ENCODE measurements at regions of chr1 and their contacts with region 1.

Region 1: DNA sequence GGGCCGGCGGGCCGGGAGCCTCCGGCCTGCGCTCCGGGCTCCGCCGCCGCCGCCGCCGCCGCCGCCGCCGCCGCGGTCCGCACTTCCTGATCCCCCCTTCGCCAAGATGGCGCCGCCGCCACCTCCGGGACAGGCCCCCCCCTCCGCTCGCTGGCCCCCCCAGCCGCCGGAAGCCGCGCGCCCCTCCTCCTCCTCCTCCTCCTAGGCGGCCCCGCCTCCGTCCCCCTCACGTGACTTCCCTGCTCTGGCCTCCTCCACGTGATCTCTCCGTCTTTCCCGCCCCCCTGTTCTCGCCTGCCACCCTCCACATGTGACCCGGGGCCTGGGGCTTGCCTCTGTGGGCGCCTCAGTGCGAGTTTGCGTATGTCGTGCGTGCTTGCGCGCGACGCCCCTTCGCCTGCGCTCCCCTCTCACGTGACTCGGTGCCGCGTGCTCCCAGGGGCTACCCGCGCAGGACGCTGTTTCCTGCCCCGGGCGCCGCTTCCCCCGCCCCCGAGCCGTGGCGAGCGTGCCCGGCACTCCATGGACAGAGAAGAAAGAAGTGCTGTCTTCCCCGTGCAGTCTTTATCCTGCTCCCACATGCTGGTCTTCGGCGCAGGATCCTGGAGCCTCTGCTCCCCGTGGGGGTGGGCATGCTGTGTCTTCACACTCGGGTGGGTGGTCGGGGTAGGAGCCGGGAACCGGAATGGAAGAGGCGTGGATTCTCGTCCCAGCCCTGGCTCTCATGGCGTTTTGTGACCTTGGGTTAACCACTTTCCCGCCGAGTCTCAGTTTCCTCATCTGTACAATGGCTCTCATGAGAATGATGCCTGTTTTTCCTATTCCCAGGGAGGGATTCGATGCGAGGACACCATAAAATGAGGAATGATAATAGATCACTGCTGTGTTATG is at the start of gene UBE2Q1:
- DNase-seq: peak; percentile 98 to 100 (median 99)
- ATAC-seq: peak; percentile 91 to 93 (median 92)
- H3K4me3 ChIP-seq: peak within 1 kb of the TSS; percentile 77 to 89
- H3K4me3 Mint-ChIP-seq: peak within 1 kb of the TSS; percentile 89 to 92 (median 90)
- H3K27ac ChIP-seq: peak within 1 kb of the TSS; percentile 85
- H3K27ac Mint-ChIP-seq: peak within 1 kb of the TSS; percentile 91 to 92
- H3K4me1 ChIP-seq: peaks cover 19 to 33% of the 10 kb centered on the region in 2 experiments
- H3K4me1 Mint-ChIP-seq: peaks cover 34 to 41% (median 36%) of the 10 kb centered on the region in 3 donors
- H3K27me3 ChIP-seq: no peaks in the 10 kb centered on the region
- H3K27me3 Mint-ChIP-seq: no peaks in the 10 kb centered on the region
- total RNA-seq, gene UBE2Q1: 64.0 to 111 (median 90.0) TPM

Region 2: DNA sequence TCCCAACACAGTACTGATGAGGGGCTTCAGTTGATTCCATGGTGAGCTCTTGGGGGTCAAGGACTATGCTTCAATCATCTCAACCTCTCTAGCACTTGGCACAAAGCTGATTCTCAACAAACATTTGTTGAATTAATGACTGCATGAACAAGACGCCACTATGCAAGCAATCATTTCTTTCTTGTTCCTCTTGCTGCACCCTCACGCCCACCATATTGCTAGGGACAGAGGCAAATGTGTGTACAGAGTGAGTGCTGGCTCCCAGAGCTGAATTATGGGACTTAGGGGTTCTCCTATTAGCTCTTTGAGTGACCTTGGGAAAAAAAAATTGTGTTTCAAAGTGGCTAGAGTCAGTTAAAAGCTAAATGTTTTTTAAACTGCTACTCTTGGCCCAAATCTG is 46.7 kb after region 1 on chr1:
- CTCF ChIA-PET with region 1: interaction called in 1 of 2 experiments, 14 read pairs
- POLR2A ChIA-PET with region 1: no interaction called
- DNase-seq: no peak
- ATAC-seq: no peak
- H3K4me3 ChIP-seq: no peak overlapping the region
- H3K4me3 Mint-ChIP-seq: peak overlapping the region; percentile 68 to 96 (median 95)
- H3K27ac ChIP-seq: no peak overlapping the region
- H3K27ac Mint-ChIP-seq: peak overlapping the region; percentile 75 to 78
- H3K4me1 ChIP-seq: peaks cover 23 to 81% of the 10 kb centered on the region in 2 experiments
- H3K4me1 Mint-ChIP-seq: peaks cover 86 to 90% (median 87%) of the 10 kb centered on the region in 3 donors
- H3K27me3 ChIP-seq: no peaks in the 10 kb centered on the region
- H3K27me3 Mint-ChIP-seq: no peaks in the 10 kb centered on the region

Region 3: DNA sequence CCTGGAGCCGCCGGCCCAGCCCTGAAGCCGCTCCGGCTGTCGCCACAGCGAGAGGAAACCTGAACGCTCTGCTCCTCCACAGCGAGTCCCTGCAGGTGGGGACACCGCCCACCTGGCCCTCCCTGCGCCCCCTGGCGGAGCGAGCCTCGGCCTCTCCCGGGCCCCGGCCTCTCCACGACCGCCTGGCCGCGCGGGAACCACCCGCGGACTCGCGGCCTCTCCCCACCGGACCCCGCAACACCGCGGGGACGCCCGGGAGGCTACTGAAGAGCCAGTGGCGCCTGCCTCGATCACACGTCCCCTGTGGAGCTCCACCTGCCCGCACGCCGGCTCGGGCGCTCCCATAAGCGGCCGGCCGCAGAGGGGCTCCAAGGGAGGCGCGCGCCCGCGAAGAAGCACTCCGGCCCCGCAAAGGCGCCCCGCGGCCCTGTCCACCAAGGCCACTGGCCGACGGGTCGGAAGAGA is 201.7 kb after region 1 on chr1:
- CTCF ChIA-PET with region 1: interaction called, 10 to 19 read pairs
- POLR2A ChIA-PET with region 1: no interaction called
- DNase-seq: peak; percentile 52 to 91 (median 77)
- ATAC-seq: peak; percentile 92 to 95 (median 94)
- H3K4me3 ChIP-seq: peak overlapping the region; percentile 39 to 67
- H3K4me3 Mint-ChIP-seq: peak overlapping the region; percentile 39 to 62 (median 59)
- H3K27ac ChIP-seq: no peak overlapping the region
- H3K27ac Mint-ChIP-seq: no peak overlapping the region
- H3K4me1 ChIP-seq: peaks cover 21 to 27% of the 10 kb centered on the region in 2 experiments
- H3K4me1 Mint-ChIP-seq: peaks cover 32 to 39% (median 37%) of the 10 kb centered on the region in 3 donors
- H3K27me3 ChIP-seq: peaks cover 0 to 12% of the 10 kb centered on the region in 2 experiments
- H3K27me3 Mint-ChIP-seq: peaks cover 0 to 18% of the 10 kb centered on the region in 2 donors

Region 4: DNA sequence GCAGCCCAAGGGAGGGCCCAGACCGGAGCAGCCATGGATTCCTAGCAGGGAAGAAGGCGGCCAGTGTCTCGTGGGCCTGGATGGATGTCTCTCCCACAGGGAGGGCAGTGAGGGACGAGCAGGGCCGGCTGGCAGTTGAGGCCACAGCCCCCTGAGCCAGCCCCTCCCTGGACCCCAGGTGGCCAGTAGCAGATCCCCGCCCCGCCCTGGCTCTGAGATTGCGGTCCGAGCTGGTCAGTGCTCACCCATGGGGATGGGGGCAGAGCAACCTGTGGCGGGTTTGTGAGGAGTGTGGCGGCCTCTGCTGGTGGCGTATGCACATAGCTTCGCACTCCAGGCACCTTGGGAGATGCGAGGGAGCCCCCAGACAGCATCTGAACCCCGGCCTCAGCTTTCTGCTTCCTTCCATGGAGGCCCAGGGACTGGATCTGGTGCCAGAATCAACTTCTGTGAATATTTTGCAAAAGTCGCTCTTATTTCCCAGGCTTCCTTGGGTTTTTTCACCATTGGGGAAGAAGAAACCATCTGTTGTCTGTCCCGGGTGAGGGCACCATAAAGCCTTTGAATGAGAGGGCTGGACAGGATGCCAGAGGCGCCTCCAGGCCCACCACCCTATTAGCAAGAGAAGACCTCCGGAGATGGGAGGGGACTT is 319.7 kb after region 1 on chr1:
- CTCF ChIA-PET with region 1: interaction called, 4 to 20 read pairs
- POLR2A ChIA-PET with region 1: no interaction called
- DNase-seq: peak; percentile 16 to 81 (median 60)
- ATAC-seq: peak; percentile 85 to 90 (median 88)
- H3K4me3 ChIP-seq: no peak overlapping the region
- H3K4me3 Mint-ChIP-seq: no peak overlapping the region
- H3K27ac ChIP-seq: no peak overlapping the region
- H3K27ac Mint-ChIP-seq: no peak overlapping the region
- H3K4me1 ChIP-seq: no peaks in the 10 kb centered on the region
- H3K4me1 Mint-ChIP-seq: no peaks in the 10 kb centered on the region
- H3K27me3 ChIP-seq: peaks cover 0 to 18% of the 10 kb centered on the region in 2 experiments
- H3K27me3 Mint-ChIP-seq: no peaks in the 10 kb centered on the region

Region 5: GRCh38 chr1:154936555-154937084 is 377.8 kb after region 1 on chr1 and contains the start of gene PMVK:
- CTCF ChIA-PET with region 1: interaction called in 1 of 2 experiments, 10 read pairs
- POLR2A ChIA-PET with region 1: no interaction called
- DNase-seq: peak; percentile 90 to 98 (median 95)
- ATAC-seq: peak; percentile 79 to 94 (median 90)
- H3K4me3 ChIP-seq: peak within 1 kb of the TSS; percentile 75 to 96
- H3K4me3 Mint-ChIP-seq: peak within 1 kb of the TSS; percentile 96 to 98 (median 97)
- H3K27ac ChIP-seq: peak within 1 kb of the TSS; percentile 97
- H3K27ac Mint-ChIP-seq: peak within 1 kb of the TSS; percentile 97 to 99
- H3K4me1 ChIP-seq: peaks cover 19 to 56% of the 10 kb centered on the region in 2 experiments
- H3K4me1 Mint-ChIP-seq: peaks cover 51 to 61% (median 57%) of the 10 kb centered on the region in 3 donors
- H3K27me3 ChIP-seq: no peaks in the 10 kb centered on the region
- H3K27me3 Mint-ChIP-seq: no peaks in the 10 kb centered on the region
- total RNA-seq, gene PMVK: 12.6 to 24.9 (median 22.4) TPM